ENCODE measurements at regions of chr4 and their contacts with region 1.

Region 1: DNA sequence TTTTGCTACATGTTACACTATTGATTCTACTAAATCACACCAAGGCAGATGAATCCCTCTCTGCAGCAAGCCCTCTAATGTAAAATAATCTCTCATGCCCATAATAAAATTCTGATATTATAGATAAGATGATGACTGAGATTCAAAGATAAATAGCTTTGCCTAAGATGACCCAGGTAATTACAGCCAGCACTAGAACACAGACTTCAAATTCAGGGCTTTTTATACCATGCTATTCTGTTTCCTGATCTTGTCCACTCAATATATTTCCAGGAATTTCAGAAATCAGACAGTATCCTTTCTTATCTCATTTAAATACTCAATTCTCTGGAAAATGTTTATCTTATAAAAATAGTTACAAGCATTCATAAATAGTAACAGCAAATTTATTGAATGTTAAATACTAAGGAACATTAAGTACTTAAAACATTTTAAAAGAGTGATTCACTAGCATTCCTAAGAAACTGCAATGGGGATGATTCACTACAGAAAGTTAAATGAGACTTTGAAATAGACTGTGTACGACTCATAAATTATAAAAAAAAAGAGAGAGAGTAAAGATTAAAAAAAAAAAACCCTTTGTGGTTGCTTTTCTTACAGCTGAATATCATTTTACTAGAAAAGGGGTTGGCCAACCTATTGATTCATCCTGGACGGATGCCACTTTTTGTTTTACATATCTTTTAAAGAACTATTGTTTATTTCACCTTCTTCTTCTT is 45.8 kb upstream of the IL21 start:
- DNase-seq: no peak
- H3K4me3 Mint-ChIP-seq: peak overlapping the region; percentile 59
- H3K27ac Mint-ChIP-seq: peak overlapping the region; percentile 94
- H3K4me1 Mint-ChIP-seq: peaks cover 69% of the 10 kb centered on the region
- H3K27me3 Mint-ChIP-seq: no peaks in the 10 kb centered on the region

Region 2: GRCh38 chr4:122341906-122342305 is 324.8 kb before region 1 on chr4:
- intact Hi-C with region 1: no loop called
- DNase-seq: no peak
- H3K4me3 Mint-ChIP-seq: no peak overlapping the region
- H3K27ac Mint-ChIP-seq: no peak overlapping the region
- H3K4me1 Mint-ChIP-seq: no peaks in the 10 kb centered on the region
- H3K27me3 Mint-ChIP-seq: no peaks in the 10 kb centered on the region

Region 3: DNA sequence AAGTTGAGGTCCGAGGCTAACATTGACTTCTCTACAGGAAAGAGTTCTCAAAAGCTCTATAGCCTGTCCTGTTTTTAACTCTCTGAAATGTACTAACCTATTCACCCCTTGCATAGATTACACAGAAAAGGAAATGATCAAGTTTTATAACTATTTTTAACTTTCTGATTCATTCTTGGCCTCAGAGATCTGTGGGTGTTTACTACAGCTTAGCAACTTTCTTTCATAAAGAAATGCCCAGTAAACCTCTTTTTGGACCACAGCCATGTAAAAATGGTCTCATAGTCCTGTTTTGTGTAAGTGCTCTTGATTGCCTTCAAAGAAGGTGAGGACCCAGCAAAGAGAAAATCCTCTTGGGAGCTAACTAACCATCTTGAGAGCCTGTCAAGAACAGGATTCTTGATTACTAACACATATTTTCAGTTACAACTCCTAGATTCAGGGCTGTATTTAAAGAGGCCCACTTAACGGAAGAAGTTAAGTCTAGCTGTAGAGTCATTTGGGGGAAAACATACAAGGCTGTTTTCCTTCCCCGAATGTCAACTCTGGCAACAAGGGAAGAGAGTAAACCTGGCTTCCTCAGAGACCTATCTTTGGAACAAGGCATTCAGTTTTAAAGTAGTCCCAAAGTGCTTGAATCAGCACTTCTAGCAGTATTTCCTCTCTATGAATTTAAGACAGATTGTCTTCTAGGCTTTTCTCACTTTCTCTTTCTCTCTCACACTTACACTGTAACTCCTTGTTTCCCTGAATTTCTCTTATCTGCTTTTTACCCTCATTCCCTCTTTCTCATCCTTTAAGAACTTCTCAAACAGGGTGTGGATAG is 124.1 kb before region 1 on chr4:
- intact Hi-C with region 1: loop called (anchors 2 kb)
- DNase-seq: peak; percentile 69
- H3K4me3 Mint-ChIP-seq: peak overlapping the region; percentile 78
- H3K27ac Mint-ChIP-seq: peak overlapping the region; percentile 94
- H3K4me1 Mint-ChIP-seq: peaks cover 80% of the 10 kb centered on the region
- H3K27me3 Mint-ChIP-seq: no peaks in the 10 kb centered on the region

Region 4: GRCh38 chr4:122689972-122690371 is 23.3 kb after region 1 on chr4:
- intact Hi-C with region 1: loop called (anchors 1 kb)
- DNase-seq: peak; percentile 80
- H3K4me3 Mint-ChIP-seq: peak overlapping the region; percentile 13
- H3K27ac Mint-ChIP-seq: peak overlapping the region; percentile 95
- H3K4me1 Mint-ChIP-seq: peaks cover 52% of the 10 kb centered on the region
- H3K27me3 Mint-ChIP-seq: no peaks in the 10 kb centered on the region

Region 5: DNA sequence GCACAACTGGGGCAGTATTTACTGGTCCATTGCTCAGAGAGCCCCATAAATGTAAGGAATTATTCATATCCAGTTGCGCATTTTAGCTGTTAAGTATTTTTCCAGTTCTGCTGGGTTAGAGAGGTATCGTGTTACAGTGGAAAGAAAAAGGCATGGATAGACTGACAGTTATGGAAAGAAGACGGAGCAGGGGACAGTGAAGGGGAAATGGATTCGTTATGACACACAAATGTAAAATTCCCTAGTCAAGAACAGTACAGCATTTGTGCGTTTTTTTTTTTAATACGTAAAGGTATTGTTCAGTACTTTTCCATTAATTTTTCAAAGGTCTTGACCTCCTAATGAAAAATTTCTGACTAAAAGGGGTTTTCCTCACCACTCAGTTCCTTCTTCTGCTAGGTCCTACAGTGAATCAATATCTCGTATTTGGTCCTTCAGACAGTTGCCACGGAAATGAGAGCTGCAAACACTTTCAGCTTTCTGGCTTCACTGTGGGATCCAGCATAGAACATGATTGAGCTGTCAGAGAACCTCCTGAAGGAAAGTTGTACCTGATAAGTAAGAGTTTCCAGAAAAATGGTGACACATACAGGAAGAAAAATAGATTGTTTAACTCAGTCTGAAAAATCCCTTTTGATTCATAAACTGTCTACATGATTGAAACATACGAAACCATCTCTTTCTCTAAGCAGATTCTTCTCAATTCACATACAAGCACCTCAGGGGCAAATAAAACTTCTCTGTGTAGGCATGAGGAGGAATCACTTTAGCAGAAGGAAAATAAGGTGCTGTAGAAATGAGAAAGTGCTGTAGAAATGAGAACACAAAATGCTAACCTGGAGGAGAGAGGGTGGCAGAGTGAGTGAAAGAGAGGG is 44.0 kb after region 1 on chr4:
- intact Hi-C with region 1: loop called (anchors 1 kb)
- DNase-seq: peak; percentile 80
- H3K4me3 Mint-ChIP-seq: peak overlapping the region; percentile 84
- H3K27ac Mint-ChIP-seq: peak overlapping the region; percentile 98
- H3K4me1 Mint-ChIP-seq: peaks cover 64% of the 10 kb centered on the region
- H3K27me3 Mint-ChIP-seq: no peaks in the 10 kb centered on the region

Region 6: DNA sequence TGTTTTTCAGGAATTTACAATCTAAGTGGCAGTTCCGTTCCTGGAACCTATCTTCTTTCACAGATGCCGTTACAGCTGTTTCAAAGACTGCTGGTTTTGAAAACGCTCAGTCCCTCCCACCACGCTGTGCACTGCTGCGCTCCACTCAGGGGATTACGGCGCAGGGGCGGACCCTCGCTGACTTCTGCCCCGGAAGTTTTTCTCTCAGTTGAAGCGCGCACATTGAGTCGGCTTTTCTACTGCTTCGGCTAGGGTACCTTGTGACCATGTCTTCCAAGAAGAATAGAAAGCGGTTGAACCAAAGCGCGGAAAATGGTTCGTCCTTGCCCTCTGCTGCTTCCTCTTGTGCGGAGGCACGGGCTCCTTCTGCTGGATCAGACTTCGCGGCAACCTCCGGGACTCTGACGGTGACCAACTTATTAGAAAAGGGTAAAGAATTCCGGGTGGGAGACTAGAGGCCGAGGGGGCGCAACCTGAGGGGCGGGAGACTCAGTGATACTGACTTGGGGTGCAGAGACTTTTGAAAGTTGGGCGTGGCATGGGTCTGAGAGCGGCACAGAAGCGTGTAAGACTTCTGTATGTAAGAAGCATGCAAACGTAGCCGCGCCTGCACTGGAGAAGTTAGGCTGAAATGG is 256.3 kb after region 1 on chr4:
- intact Hi-C with region 1: loop called (anchors 5 kb)
- DNase-seq: peak; percentile 97
- H3K4me3 Mint-ChIP-seq: no peak overlapping the region
- H3K27ac Mint-ChIP-seq: peak overlapping the region; percentile 96
- H3K4me1 Mint-ChIP-seq: peaks cover 24% of the 10 kb centered on the region
- H3K27me3 Mint-ChIP-seq: no peaks in the 10 kb centered on the region

Measured in activated CD4-positive, alpha-beta T cell treated with anti-CD3 and anti-CD28 coated beads, Interleukin-2, amount 10 ng/mL, durations not matched to agents 24 days and 14 days (primary cell).